ENCODE measurements at regions of chr3 and their contacts with region 1.

Region 1: DNA sequence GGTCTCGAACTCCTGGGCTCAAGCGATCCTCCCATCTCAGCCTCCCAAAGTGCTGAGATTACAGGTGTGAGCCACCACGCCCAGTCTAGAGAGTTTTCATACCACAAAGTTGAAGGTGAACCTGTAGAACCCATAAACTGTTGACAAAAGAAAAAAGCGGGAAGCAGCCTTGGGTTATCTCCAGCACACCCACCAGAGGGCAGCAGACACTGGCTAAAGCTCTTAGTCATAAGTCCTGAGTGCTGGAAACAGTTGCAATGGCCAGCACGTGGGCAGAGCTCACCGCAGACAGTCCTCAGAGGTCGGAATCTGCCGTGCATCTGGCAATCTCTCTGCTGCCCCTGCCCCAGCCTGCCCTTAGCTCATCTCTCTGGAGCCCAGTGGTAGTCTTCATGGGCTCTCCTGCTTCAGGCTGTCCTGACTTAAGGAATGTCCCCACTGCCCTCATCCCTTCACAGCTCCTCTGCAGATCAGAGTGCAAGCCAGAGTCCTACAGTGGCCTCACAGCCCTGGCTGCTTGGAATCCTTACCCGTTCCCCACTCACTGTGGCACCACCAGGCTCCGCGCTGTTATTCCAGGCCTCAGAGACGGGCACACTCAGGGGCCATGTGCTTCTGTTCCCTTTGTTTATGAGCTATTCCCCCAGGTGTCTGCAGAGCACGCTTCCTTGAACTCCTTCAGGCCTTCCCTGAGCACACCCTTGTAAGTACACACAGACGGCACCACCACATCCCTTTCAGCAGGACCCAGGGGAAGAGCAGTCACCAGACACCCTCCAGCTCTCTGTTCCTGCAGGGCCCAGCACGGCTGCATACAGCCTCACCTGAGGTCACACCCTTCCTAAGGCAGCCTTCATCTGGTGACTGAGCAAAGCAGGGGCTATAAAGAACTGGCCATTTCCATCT is 8.8 kb upstream of the ELP6 start:
- DNase-seq: peak; percentile 51 to 87 (median 64)
- ATAC-seq: peak; percentile 95
- H3K4me3 ChIP-seq: no peak overlapping the region
- H3K4me3 Mint-ChIP-seq: no peak overlapping the region
- H3K27ac ChIP-seq: no peak overlapping the region
- H3K27ac Mint-ChIP-seq: no peak overlapping the region
- H3K4me1 ChIP-seq: peaks cover 7% of the 10 kb centered on the region
- H3K4me1 Mint-ChIP-seq: no peaks in the 10 kb centered on the region
- H3K27me3 ChIP-seq: no peaks in the 10 kb centered on the region
- H3K27me3 Mint-ChIP-seq: no peaks in the 10 kb centered on the region
- CTCF ChIP-seq: peak; percentile 82

Region 2: DNA sequence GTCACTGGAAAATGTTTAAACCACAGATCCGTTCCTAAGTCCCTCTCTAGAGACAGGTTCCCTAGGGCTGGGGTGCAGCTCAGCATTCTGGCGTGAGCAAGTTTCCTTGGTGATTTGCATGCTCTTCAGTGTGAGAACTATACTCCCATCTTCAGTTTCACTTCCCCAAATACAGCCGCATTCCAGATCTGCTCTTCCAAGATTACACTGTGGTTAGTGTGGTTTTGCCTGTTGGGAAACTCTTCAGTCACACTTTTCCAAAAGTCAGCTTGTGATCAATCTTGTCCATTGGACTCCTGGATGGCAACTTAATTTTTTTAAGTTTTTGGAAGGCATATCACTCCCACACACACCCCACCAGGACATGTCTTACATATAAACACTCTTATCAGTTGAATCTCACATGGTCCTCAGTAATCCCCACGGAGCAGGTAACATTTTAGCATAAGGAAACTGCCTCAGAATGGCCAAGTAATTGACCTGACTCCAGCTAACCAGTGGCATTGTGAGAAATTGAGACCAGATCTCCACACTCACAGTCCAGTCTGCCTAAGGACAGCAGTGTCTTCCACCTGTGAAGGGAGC is 175.0 kb before region 1 on chr3:
- CTCF ChIA-PET with region 1: no interaction called
- POLR2A ChIA-PET with region 1: no interaction called
- intact Hi-C with region 1: no loop called
- DNase-seq: peak in 2 of 14 experiments; percentile 3 to 30
- ATAC-seq: no peak
- H3K4me3 ChIP-seq: no peak overlapping the region
- H3K4me3 Mint-ChIP-seq: no peak overlapping the region
- H3K27ac ChIP-seq: no peak overlapping the region
- H3K27ac Mint-ChIP-seq: peak overlapping the region; percentile 82
- H3K4me1 ChIP-seq: no peaks in the 10 kb centered on the region
- H3K4me1 Mint-ChIP-seq: no peaks in the 10 kb centered on the region
- H3K27me3 ChIP-seq: no peaks in the 10 kb centered on the region
- H3K27me3 Mint-ChIP-seq: no peaks in the 10 kb centered on the region
- CTCF ChIP-seq: no peak

Region 3: GRCh38 chr3:47791193-47791855 is 269.0 kb after region 1 on chr3:
- CTCF ChIA-PET with region 1: interaction called, 14 read pairs
- POLR2A ChIA-PET with region 1: interaction called, 3 read pairs
- intact Hi-C with region 1: loop called (anchors 1 kb)
- DNase-seq: no peak
- ATAC-seq: no peak
- H3K4me3 ChIP-seq: no peak overlapping the region
- H3K4me3 Mint-ChIP-seq: peak overlapping the region; percentile 31
- H3K27ac ChIP-seq: no peak overlapping the region
- H3K27ac Mint-ChIP-seq: no peak overlapping the region
- H3K4me1 ChIP-seq: peaks cover 6% of the 10 kb centered on the region
- H3K4me1 Mint-ChIP-seq: peaks cover 4% of the 10 kb centered on the region
- H3K27me3 ChIP-seq: no peaks in the 10 kb centered on the region
- H3K27me3 Mint-ChIP-seq: no peaks in the 10 kb centered on the region
- CTCF ChIP-seq: no peak

Region 4: DNA sequence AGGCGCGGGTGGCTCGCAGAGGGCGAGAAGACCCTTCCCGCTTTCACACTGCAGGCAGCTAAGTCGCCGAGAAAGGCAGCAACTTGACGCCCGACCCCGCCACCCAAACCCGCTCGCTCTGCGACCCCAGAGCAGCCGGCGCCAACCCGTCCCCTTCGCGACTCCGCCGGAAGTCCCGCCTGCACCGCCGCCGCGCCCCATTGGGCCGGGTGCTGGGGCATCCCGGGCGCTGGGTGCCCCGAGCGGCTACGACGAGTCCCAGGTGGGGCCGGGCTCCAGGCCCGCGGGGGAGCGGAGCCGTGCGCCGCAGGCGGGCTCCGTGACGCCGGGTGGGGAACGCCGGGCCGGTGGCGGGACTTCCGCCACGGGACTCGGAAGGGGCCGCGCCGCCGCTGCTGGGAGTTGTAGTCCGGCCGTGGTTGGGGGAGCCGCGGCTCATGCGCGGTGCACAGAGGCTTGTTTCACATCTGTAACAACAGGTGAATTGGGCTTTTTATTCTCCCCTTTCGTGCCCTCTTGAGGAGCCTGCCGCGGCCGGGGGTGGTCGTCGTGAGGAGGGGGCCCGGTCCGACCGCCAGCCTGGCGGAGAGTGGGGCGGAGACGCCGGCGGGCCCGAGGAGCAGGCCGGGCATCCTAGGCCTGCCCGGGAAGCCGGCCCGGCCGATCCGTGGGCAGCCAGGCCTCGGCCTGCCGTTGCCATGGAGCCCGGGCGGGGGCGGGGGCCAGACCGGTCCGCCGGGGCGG is 280.6 kb after region 1 on chr3 and contains the start of gene DHX30:
- CTCF ChIA-PET with region 1: interaction called, 3 read pairs
- POLR2A ChIA-PET with region 1: no interaction called
- intact Hi-C with region 1: loop called in 1 of 2 experiments (anchors 5 kb)
- DNase-seq: peak; percentile 63 to 94 (median 80)
- ATAC-seq: peak; percentile 90
- H3K4me3 ChIP-seq: peak within 1 kb of the TSS; percentile 98
- H3K4me3 Mint-ChIP-seq: peak within 1 kb of the TSS; percentile 97
- H3K27ac ChIP-seq: peak within 1 kb of the TSS; percentile 83 to 85
- H3K27ac Mint-ChIP-seq: peak within 1 kb of the TSS; percentile 96
- H3K4me1 ChIP-seq: peaks cover 26% of the 10 kb centered on the region
- H3K4me1 Mint-ChIP-seq: peaks cover 20% of the 10 kb centered on the region
- H3K27me3 ChIP-seq: no peaks in the 10 kb centered on the region
- H3K27me3 Mint-ChIP-seq: no peaks in the 10 kb centered on the region
- CTCF ChIP-seq: no peak
- total RNA-seq, gene DHX30: 75.1 to 75.6 TPM